K562 (cell line): ENCODE measurements at regions of chr3 and their contacts with region 1.

Region 1: GRCh38 chr3:31695280-31696008 is 162.7 kb downstream of the STT3B start:
- DNase-seq: peak in 2 of 4 experiments; percentile 16 to 22
- ATAC-seq: peak; percentile 73
- H3K4me3 ChIP-seq: no peak overlapping the region
- H3K27ac ChIP-seq: no peak overlapping the region
- H3K4me1 ChIP-seq: no peaks in the 10 kb centered on the region
- H3K27me3 ChIP-seq: no peaks in the 10 kb centered on the region; a peak in 1 of 5 replicates
- CTCF ChIP-seq: peak; percentile 2 to 44 (median 38); a peak in 4 of 6 replicates
- EP300 ChIP-seq: no peak
- POLR2A ChIP-seq: no peak
- RAD21 ChIP-seq: peak; percentile 33 to 41; a peak in 3 of 4 replicates

Region 2: GRCh38 chr3:30779686-30780287 is 915.7 kb before region 1 on chr3:
- CTCF ChIA-PET with region 1: no interaction called
- POLR2A ChIA-PET with region 1: no interaction called
- in situ Hi-C with region 1: no loop called
- intact Hi-C with region 1: loop called (anchors 10 kb)
- DNase-seq: peak in 2 of 4 experiments; percentile 8 to 28
- ATAC-seq: no peak
- H3K4me3 ChIP-seq: no peak overlapping the region
- H3K27ac ChIP-seq: no peak overlapping the region
- H3K4me1 ChIP-seq: no peaks in the 10 kb centered on the region
- H3K27me3 ChIP-seq: no peaks in the 10 kb centered on the region
- CTCF ChIP-seq: peak in 2 of 3 experiments; percentile 16 to 38; a peak in 2 of 6 replicates
- EP300 ChIP-seq: no peak
- POLR2A ChIP-seq: no peak
- RAD21 ChIP-seq: peak; percentile 59 to 70

Region 3: DNA sequence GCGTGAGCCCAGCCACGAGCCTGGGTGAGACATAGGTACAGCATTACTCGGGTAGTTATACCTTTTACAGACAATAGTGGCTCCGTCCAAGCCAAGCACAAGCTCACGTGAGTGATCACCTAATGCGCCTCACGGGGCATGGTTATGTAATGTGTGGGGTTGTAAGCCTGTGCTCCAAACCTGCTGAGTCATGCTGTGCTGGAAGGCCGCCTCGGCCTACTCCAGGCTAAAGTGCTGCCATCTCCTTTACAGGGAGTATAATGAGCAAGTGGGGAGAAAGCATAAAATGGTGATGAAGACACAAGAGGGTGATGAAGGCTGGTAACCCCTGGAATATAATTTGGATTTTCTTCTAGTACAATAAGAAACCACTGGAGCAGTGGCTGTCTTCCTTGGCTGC is 338.5 kb before region 1 on chr3:
- CTCF ChIA-PET with region 1: no interaction called
- POLR2A ChIA-PET with region 1: no interaction called
- in situ Hi-C with region 1: no loop called
- intact Hi-C with region 1: loop called (anchors 10 kb)
- DNase-seq: peak; percentile 26 to 89 (median 44)
- ATAC-seq: peak; percentile 100
- H3K4me3 ChIP-seq: no peak overlapping the region
- H3K27ac ChIP-seq: no peak overlapping the region; the same call in 1 of the 3 replicates
- H3K4me1 ChIP-seq: peaks cover 0 to 15% of the 10 kb centered on the region in 2 experiments; a peak in 3 of 5 replicates
- H3K27me3 ChIP-seq: no peaks in the 10 kb centered on the region
- CTCF ChIP-seq: no peak
- EP300 ChIP-seq: no peak
- POLR2A ChIP-seq: no peak
- RAD21 ChIP-seq: peak in 1 of 2 experiments; percentile 9; a peak in 1 of 4 replicates

Region 4: DNA sequence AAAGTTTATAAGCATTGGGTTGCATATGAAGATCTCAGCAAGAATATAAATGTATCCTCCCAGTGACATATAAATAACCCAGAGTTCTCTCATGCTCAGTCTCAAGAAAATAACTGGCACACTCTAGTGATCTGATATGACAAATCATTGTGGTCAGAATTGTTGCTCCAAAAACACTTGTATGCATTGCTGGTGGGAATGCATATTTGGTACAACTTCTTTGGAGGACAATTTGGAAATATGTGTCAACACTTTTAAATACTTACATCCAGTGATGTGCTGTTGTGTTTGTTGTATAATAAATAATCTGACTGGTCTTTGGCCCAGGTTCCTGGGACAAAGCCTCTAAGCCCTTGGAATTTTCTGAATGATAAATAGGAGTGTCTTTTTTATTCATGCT is 229.4 kb before region 1 on chr3:
- CTCF ChIA-PET with region 1: no interaction called
- POLR2A ChIA-PET with region 1: no interaction called
- in situ Hi-C with region 1: no loop called
- intact Hi-C with region 1: no loop called
- DNase-seq: no peak
- ATAC-seq: no peak
- H3K4me3 ChIP-seq: no peak overlapping the region
- H3K27ac ChIP-seq: no peak overlapping the region
- H3K4me1 ChIP-seq: peaks cover 0 to 16% of the 10 kb centered on the region in 2 experiments; a peak in 3 of 5 replicates
- H3K27me3 ChIP-seq: no peaks in the 10 kb centered on the region
- CTCF ChIP-seq: no peak
- EP300 ChIP-seq: no peak
- POLR2A ChIP-seq: no peak
- RAD21 ChIP-seq: no peak